ENCODE measurements at regions of chr20 and their contacts with region 1.

Region 1: DNA sequence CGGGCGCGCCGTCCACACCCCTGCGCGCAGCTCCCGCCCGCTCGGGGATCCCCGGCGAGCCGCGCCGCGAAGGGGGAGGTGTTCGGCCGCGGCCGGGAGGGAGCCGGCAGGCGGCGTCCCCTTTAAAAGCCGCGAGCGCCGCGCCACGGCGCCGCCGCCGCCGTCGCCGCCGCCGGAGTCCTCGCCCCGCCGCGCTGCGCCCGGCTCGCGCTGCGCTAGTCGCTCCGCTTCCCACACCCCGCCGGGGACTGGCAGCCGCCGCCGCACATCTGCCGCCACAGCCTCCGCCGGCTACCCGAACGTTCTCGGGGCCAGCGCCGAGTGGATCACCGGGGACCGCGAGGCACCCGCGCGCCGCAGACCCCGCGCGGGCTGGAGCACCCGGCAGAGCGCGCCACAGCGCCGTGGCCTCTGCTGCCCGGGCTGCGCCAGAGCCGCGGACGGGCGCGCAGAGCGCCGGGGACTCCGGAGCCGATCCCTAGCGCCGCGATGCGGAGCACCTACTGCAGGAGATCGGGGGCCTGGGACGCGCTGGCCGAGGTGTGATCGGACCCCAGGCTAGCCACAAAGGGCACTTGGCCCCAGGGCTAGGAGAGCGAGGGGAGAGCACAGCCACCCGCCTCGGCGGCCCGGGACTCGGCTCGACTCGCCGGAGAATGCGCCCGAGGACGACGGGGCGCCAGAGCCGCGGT is at the start of gene BMP2:
- H3K4me3 Mint-ChIP-seq: peak within 1 kb of the TSS; percentile 78
- H3K27ac Mint-ChIP-seq: no peak within 1 kb of the TSS
- H3K4me1 Mint-ChIP-seq: peaks cover 17% of the 10 kb centered on the region
- H3K27me3 Mint-ChIP-seq: peaks cover 75% of the 10 kb centered on the region

Region 2: DNA sequence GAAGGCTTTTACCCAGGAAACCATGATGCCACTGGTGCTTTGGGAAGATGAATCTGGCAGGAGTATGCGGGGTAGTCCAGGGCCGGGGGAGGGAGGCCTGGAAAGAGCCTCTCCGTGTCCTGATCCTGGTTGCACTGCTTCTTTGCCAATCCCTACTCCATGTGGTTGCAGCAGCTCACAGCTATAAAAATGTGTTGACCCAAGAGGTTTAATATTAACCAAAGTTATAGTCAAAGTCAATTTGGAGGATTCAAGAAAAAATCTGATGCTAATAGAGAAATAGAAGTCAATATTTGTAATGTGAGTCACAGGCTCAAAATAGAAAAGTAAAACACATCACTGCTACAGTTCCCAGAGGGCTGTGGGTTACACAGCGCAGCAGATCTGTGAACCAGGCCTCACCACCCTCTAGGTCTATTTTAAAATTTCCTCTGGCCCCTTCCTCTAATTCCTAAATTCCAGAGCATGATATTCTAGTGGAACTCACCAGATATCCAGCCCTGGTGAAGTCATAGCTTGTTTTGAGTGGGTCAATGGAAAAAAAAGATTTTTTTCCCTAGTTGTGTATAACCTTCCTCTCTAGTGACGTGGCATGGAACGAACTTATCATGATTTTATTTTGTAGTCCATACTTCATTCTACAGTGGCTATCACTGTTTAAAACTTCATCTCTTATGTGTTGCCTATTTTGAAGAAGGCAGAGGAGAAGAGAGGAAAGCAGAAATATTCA is 63.4 kb before region 1 on chr20:
- intact Hi-C with region 1: loop called (anchors 5 kb)
- H3K4me3 Mint-ChIP-seq: no peak overlapping the region
- H3K27ac Mint-ChIP-seq: no peak overlapping the region
- H3K4me1 Mint-ChIP-seq: peaks cover 45% of the 10 kb centered on the region
- H3K27me3 Mint-ChIP-seq: peaks cover 57% of the 10 kb centered on the region

Region 3: GRCh38 chr20:7094438-7094997 is 326.8 kb after region 1 on chr20:
- intact Hi-C with region 1: loop called (anchors 2 kb)
- H3K4me3 Mint-ChIP-seq: no peak overlapping the region
- H3K27ac Mint-ChIP-seq: no peak overlapping the region
- H3K4me1 Mint-ChIP-seq: no peaks in the 10 kb centered on the region
- H3K27me3 Mint-ChIP-seq: no peaks in the 10 kb centered on the region

Region 4: GRCh38 chr20:7285918-7286556 is 518.4 kb after region 1 on chr20:
- intact Hi-C with region 1: loop called (anchors 5 kb)
- H3K4me3 Mint-ChIP-seq: no peak overlapping the region
- H3K27ac Mint-ChIP-seq: no peak overlapping the region
- H3K4me1 Mint-ChIP-seq: no peaks in the 10 kb centered on the region
- H3K27me3 Mint-ChIP-seq: no peaks in the 10 kb centered on the region

Measured in dendritic cell treated with granulocyte-macrophage colony-stimulating factor and Interleukin-4, amounts not matched to agents 40 ng/mL and 50 ng/mL, for 4 days (primary cell).